ENCODE measurements at regions of chr1 and their contacts with region 1.

Region 1: GRCh38 chr1:19390901-19391595 is 78.9 kb downstream of the SLC66A1 start:
- DNase-seq: peak; percentile 69
- H3K4me3 Mint-ChIP-seq: peak overlapping the region; percentile 62
- H3K27ac Mint-ChIP-seq: peak overlapping the region; percentile 81
- H3K4me1 Mint-ChIP-seq: peaks cover 68% of the 10 kb centered on the region
- H3K27me3 Mint-ChIP-seq: no peaks in the 10 kb centered on the region

Region 2: GRCh38 chr1:19341201-19342072 is 49.6 kb before region 1 on chr1:
- CTCF ChIA-PET with region 1: no interaction called
- intact Hi-C with region 1: loop called (anchors 5 kb)
- DNase-seq: peak; percentile 86
- H3K4me3 Mint-ChIP-seq: no peak overlapping the region
- H3K27ac Mint-ChIP-seq: no peak overlapping the region
- H3K4me1 Mint-ChIP-seq: peaks cover 10% of the 10 kb centered on the region
- H3K27me3 Mint-ChIP-seq: no peaks in the 10 kb centered on the region

Region 3: DNA sequence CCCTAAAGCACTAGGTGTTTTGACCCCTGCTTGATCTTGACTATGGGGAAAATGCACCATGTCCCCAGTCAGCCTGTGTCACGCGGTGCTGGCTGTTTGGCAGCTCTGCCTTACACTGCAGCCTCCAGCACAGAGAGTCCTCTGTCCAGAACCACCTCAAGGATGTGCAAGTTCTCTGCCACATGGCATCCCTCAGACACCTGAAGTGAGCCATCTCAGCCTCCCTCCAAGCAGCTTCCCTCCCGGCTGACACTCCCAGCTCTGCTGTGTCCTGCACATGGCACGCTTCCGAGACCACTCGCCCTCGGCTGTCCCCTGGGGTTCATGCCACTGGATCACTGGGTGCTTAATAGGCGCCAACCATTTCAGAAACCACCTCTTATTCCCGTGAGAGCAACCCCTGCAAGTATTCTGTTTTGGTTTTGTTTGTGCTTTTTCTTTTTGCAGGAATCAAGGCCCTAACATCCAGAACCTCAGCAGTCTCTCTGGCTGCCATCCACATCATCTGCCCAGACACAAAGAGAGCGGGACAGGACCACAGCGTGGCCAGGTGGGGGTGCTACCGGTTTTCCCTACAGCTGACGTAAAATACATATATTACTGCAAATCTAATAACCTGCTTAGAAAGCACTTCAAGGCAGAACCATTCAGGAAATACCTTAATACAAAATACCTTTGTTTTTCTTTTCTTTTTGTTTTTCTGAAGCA is 48.6 kb after region 1 on chr1:
- CTCF ChIA-PET with region 1: interaction called, 4 read pairs
- intact Hi-C with region 1: loop called (anchors 5 kb)
- DNase-seq: peak; percentile 67
- H3K4me3 Mint-ChIP-seq: no peak overlapping the region
- H3K27ac Mint-ChIP-seq: peak overlapping the region; percentile 21
- H3K4me1 Mint-ChIP-seq: peaks cover 86% of the 10 kb centered on the region
- H3K27me3 Mint-ChIP-seq: no peaks in the 10 kb centered on the region

Region 4: GRCh38 chr1:19448491-19449439 is 57.7 kb after region 1 on chr1:
- CTCF ChIA-PET with region 1: interaction called, 10 read pairs
- intact Hi-C with region 1: no loop called
- DNase-seq: peak; percentile 74
- H3K4me3 Mint-ChIP-seq: peak overlapping the region; percentile 17
- H3K27ac Mint-ChIP-seq: peak overlapping the region; percentile 90
- H3K4me1 Mint-ChIP-seq: peaks cover 91% of the 10 kb centered on the region
- H3K27me3 Mint-ChIP-seq: no peaks in the 10 kb centered on the region

Region 5: DNA sequence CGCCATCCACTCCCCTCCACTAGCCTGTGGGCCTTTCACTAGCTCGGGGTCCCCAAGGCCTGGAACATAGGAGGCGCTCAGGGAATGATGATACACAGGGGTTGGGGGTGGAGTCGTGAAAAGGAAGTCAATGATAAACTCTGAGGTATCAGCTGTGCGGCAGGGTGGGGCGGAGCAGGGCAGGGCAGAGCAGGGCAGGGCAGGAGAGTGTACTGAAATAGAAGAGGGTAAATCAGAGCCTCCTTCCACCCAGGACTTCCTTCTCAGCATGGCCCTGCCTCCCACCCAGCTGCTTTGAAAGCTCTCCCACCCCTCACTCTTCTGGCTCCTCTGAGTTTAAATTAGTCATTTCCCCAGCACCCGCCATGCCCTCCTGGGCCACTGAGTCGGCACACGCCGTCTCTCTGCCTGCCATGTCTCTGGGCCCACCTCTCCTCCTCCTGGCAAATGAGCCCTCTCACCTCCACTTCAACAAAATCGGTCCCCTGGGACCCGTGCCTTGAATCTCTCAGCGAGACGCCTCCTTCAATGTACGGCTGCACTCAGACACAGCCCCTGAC is 77.4 kb after region 1 on chr1:
- CTCF ChIA-PET with region 1: interaction called, 3 read pairs
- intact Hi-C with region 1: loop called (anchors 5 kb)
- DNase-seq: peak; percentile 87
- H3K4me3 Mint-ChIP-seq: peak overlapping the region; percentile 37
- H3K27ac Mint-ChIP-seq: peak overlapping the region; percentile 88
- H3K4me1 Mint-ChIP-seq: peaks cover 89% of the 10 kb centered on the region
- H3K27me3 Mint-ChIP-seq: no peaks in the 10 kb centered on the region

Region 6: DNA sequence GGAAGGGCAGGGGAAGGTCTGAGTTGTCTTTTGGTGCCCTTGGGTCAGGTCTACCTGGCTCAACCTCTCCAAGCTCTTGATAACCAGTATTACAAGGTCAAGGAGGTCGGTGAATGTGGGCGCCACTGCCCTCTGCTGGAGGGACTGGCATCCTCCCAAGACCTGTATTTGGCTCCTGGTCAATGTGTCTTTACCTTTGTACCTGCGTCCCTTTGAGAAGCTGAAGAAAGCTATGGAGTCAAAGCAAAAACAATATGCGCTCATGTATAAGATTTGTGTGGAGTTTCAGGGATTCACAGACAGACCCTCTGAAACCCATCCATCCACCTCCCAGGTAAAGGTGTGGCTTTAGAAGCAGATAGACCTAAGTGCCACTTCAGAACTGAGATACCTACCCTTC is 191.3 kb after region 1 on chr1:
- CTCF ChIA-PET with region 1: interaction called, 21 read pairs
- intact Hi-C with region 1: loop called (anchors 1 kb)
- DNase-seq: peak; percentile 89
- H3K4me3 Mint-ChIP-seq: no peak overlapping the region
- H3K27ac Mint-ChIP-seq: no peak overlapping the region
- H3K4me1 Mint-ChIP-seq: peaks cover 11% of the 10 kb centered on the region
- H3K27me3 Mint-ChIP-seq: no peaks in the 10 kb centered on the region

Measured in activated naive CD4-positive, alpha-beta T cell treated with anti-CD3 and anti-CD28 coated beads for 36 hours (primary cell).